ENCODE measurements at regions of chr3 and their contacts with region 1.

Region 1: DNA sequence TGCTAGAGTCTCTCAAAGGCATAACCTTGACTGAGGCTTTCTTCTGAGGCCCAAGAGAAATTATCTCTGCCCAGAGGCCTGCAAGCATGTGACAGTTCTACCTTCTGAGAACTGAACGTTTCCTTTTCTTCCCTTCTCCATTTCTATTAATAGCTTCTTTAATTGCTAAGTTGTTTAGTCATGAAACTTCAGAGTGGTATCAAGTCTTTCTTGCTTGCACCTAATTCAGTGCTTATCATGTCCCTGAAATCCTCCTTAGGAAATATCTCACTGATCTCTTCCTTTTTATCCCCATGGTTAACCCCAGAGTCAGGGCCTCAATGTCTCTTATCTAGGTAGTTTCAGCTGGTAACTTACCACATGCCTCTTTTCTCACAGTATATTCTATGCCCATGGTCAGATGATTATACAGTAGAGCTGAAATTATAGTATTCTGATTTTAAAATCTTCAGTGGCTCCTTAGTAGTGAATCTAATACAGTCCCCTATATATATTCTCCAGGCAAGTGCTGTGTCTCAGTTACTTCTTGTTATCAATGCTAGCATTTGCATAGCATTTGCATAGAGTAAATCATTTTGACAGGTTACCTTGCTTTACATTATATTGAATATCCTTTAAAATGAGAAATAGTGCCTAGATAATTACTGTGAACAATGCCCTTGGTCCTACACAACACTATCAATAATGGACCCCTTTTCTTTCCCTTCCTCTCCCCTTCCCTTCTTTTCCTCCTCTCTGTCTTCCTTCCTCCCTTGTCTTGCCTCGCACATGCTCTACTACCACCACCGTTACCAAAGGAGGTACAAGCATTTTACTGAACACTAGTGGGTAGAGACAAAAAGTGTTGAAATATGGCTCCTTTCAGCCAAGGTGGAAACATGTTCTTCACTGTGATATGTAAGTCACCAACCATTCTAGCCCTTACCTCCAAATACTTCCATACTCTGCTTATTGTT is 33.0 kb downstream of the KBTBD8 start:
- DNase-seq: no peak
- H3K4me3 ChIP-seq: no peak overlapping the region
- H3K4me3 Mint-ChIP-seq: peak overlapping the region in 1 of 2 donors; percentile 61
- H3K27ac ChIP-seq: no peak overlapping the region
- H3K27ac Mint-ChIP-seq: peak overlapping the region in 3 of 7 donors; percentile 44 to 74 (median 52)
- H3K4me1 ChIP-seq: peaks cover 7 to 12% of the 10 kb centered on the region in 2 donors
- H3K4me1 Mint-ChIP-seq: peaks cover 12% of the 10 kb centered on the region
- H3K27me3 ChIP-seq: no peaks in the 10 kb centered on the region
- H3K27me3 Mint-ChIP-seq: peaks cover 0 to 7% (median 6%) of the 10 kb centered on the region in 3 donors
- CTCF ChIP-seq: no peak

Region 2: GRCh38 chr3:66971891-66972551 is 59.0 kb before region 1 on chr3:
- intact Hi-C with region 1: loop called in 1 of 2 experiments (anchors 5 kb)
- DNase-seq: peak; percentile 64 to 77 (median 76)
- H3K4me3 ChIP-seq: peak overlapping the region; percentile 11 to 70 (median 43)
- H3K4me3 Mint-ChIP-seq: peak overlapping the region; percentile 78 to 86
- H3K27ac ChIP-seq: peak overlapping the region; percentile 5 to 51
- H3K27ac Mint-ChIP-seq: peak overlapping the region in 5 of 7 donors; percentile 20 to 55 (median 49)
- H3K4me1 ChIP-seq: peaks cover 8 to 9% of the 10 kb centered on the region in 2 donors
- H3K4me1 Mint-ChIP-seq: peaks cover 13% of the 10 kb centered on the region
- H3K27me3 ChIP-seq: no peaks in the 10 kb centered on the region
- H3K27me3 Mint-ChIP-seq: peaks cover 0 to 6% (median 1%) of the 10 kb centered on the region in 3 donors
- CTCF ChIP-seq: peak; percentile 89

Region 3: GRCh38 chr3:67540198-67540894 is 509.3 kb after region 1 on chr3:
- intact Hi-C with region 1: no loop called
- DNase-seq: no peak
- H3K4me3 ChIP-seq: no peak overlapping the region
- H3K4me3 Mint-ChIP-seq: no peak overlapping the region
- H3K27ac ChIP-seq: no peak overlapping the region
- H3K27ac Mint-ChIP-seq: peak overlapping the region in 1 of 7 donors; percentile 21
- H3K4me1 ChIP-seq: no peaks in the 10 kb centered on the region
- H3K4me1 Mint-ChIP-seq: no peaks in the 10 kb centered on the region
- H3K27me3 ChIP-seq: no peaks in the 10 kb centered on the region
- H3K27me3 Mint-ChIP-seq: peaks cover 0 to 3% (median 0%) of the 10 kb centered on the region in 3 donors
- CTCF ChIP-seq: no peak